HEK293T (cell line): ENCODE measurements at regions of chr5 and their contacts with region 1.

Region 1: GRCh38 chr5:132007399-132008165 is 3.9 kb downstream of the ACSL6 start:
- DNase-seq: peak; percentile 70

Region 2: DNA sequence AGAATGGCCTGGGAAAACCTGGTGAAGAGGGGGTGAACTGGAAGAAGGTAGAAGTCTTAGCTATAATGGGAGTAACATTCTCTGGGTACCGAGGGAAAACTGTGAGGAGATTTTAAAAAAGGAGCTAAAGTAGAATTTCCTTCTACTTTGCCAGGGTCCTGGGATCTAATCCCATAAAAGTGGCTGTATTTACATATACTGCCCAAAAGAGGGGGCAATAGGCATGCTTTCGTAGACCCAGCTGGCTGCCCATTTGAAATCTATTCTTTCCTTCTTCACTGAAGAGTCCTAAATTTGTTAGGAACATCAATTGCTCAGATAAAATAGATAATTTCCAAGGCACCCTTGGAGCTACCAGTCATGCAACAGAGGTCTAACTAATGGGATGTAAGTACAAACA is 584.5 kb before region 1 on chr5:
- CTCF ChIA-PET with region 1: interaction called, 13 read pairs
- POLR2A ChIA-PET with region 1: no interaction called
- DNase-seq: peak; percentile 38

Region 3: DNA sequence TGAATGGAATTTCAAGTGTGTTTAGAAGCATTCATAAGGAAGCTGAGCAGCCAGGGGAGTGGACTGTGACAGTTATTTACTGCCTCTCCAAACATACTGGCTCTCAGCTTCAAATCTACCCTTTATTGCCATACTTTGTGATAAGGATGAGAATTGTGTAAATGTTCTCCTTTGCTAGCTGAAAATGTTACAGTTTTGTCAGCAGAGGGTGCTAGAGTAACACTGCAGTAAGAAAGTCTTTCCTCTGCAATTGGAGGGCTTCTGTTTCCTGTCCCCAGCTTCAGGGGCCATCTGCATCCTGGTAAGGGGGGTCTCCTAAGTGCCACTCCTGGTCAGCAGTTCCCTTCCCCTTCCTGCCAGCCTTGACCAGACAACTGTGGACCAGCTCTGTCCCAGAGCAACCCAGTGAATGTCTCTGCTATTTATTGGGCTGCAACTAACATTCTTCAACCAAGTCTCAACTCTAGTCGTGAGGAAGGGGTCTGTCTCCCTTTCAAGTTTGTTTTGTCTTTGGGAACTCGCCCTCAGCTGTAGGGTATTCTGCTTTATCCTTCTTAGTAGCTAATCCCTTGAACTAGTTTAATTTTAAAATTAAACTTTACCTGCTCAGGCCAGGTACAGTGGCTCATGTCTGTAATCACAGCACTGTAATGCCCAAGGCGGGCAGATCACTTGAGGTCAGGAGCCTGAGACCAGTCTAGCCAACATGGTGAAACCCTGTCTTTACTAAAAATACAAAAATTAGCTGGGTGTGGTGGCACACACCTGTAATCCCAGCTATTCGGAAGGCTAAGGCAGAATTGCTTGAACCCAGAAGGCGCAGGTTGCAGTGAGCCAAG is 417.9 kb before region 1 on chr5:
- CTCF ChIA-PET with region 1: interaction called, 32 read pairs
- POLR2A ChIA-PET with region 1: no interaction called
- DNase-seq: peak; percentile 60

Region 4: GRCh38 chr5:131932235-131932634 is 75.3 kb before region 1 on chr5:
- CTCF ChIA-PET with region 1: no interaction called
- POLR2A ChIA-PET with region 1: no interaction called
- DNase-seq: no peak

Region 5: GRCh38 chr5:132024789-132025402 is 17.3 kb after region 1 on chr5:
- CTCF ChIA-PET with region 1: no interaction called
- POLR2A ChIA-PET with region 1: no interaction called
- DNase-seq: no peak

Region 6: DNA sequence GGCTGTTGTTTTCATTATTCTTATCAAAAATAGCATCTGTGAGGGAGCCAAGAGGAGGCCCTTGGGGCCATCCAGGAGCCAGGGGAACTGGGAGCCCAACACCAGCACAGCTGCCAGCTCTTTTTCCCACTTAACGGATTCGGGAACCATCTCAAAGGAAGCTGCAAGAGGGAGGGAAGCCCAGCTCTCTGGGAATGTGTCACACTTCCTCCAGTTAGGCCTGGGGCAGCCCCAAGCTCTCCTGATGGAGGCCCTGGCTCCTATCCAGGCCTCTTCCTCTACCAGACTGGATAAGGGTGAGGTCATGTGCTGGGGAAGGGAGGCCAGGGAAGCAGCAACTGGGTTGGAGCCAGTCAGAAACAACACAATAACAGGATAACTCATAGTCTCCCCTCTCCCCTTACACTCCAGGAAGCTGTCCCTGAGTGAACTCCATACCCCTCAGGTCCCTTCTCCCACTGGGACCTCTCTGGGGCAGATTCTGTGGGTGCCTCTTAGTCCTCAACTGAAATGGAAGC is 78.8 kb after region 1 on chr5:
- CTCF ChIA-PET with region 1: no interaction called
- POLR2A ChIA-PET with region 1: no interaction called
- DNase-seq: no peak

Region 7: GRCh38 chr5:132114150-132115121 is 106.9 kb after region 1 on chr5:
- CTCF ChIA-PET with region 1: no interaction called
- POLR2A ChIA-PET with region 1: no interaction called
- DNase-seq: no peak